Lower leg skin (tissue), 4 donors: ENCODE measurements at regions of chr4 and their contacts with region 1.

Region 1: DNA sequence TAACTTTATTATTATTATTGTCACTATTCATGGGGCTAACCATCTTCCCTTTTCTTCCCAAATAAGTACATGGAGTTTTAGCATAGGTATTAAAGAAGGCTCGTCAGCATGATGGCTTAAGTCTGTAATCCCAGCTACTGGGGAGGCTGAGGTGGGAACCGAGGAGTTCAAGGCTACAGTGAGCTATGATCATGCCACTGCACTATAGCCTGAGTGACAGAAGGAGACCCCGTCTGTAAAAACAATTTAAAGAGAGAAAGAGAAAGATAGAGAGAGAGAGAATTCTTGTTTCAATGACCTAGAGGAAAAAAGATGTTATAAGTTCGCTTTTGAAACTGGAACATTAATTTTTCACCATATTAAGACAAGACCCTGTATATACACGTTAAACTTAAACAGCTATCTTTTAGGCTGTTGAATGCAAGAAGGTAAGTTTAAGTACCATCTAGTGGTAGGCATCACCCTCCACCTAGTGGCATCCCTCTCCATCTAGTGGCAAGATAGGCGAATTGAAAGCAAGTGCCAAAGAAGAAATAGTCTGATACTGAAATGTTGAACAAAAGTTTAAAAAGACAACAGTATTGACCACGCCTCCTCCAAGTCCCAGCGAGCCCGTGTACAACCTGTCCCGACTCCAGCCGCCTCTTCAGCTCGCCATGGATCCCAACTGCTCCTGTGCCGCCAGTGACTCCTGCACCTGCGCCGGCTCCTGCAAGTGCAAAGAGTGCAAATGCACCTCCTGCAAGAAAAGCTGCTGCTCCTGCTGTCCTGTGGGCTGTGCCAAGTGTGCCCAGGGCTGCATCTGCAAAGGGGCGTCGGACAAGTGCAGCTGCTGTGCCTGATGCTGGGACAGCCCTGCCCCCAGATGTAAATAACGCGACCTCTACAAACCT is 26.0 kb upstream of the YTHDC1 start:
- DNase-seq: no peak
- H3K4me3 ChIP-seq: no peak overlapping the region
- CTCF ChIP-seq: peak in 1 of 3 donors; percentile 57
- POLR2A ChIP-seq: no peak

Region 2: DNA sequence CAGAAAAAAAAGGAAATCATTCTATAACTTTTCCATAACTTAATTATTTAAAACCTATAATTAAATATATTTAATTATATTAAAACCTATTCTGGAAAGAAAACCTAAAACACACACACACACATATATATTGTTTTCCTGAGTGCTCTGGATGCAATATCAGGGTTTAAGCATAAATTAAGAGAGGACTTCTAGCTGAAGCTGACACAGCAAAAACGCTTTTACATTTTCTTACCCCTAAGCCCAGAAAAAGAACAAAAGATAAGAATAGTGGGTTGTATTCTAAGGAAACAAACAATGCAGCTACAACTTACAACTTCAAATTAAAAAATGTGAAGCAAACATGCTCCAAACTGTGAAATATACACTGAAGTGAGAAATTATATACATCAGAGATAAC is 182.7 kb before region 1 on chr4:
- intact Hi-C with region 1: no loop called
- DNase-seq: no peak
- H3K4me3 ChIP-seq: no peak overlapping the region
- CTCF ChIP-seq: no peak
- POLR2A ChIP-seq: no peak

Region 3: GRCh38 chr4:68271851-68272756 is 103.8 kb before region 1 on chr4:
- intact Hi-C with region 1: loop called (anchors 5 kb)
- DNase-seq: no peak
- H3K4me3 ChIP-seq: no peak overlapping the region
- CTCF ChIP-seq: no peak
- POLR2A ChIP-seq: no peak